PC-9 (cell line): ENCODE measurements at regions of chr4 and their contacts with region 1.

Region 1: DNA sequence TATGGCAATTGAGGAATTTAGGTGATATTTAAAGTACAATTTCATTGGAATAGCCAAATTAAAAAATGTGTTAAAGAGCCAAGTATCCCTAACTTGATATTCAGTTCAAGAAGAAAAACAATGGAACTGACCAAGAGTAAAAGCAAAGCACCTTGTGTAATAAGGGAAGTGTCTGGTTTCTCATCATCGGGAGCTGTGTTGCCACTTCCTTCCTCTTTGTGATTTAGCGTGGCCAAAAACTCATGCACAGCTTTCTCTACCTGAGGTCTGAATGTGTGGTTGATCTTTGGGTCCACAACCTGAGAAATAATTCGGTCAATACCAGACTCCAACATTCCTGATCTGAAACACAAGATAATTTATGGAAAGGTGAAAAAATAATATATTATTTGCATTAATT is 12.4 kb downstream of the BOD1L1 start:
- DNase-seq: no peak
- H3K4me3 ChIP-seq: no peak overlapping the region
- H3K27ac ChIP-seq: no peak overlapping the region
- H3K4me1 ChIP-seq: no peaks in the 10 kb centered on the region
- H3K27me3 ChIP-seq: no peaks in the 10 kb centered on the region
- CTCF ChIP-seq: no peak

Region 2: DNA sequence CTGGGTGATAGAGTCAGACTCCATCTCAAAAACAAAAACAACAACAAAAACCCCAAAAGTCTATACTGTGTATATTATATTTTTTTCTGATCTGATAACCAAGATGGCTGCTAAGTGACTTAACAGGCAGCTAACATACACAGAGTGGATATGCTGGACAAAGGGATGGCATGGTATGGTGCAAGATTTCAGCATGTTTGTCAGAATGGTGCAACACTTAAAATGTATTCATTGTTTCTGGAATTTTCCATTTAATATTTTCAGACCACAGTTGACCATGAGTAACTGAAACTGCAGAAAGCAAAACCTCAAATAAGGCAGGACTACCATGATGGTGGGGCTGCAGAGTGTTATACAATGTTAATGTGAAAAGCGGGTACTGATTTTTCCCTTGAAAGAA is 18.5 kb after region 1 on chr4:
- CTCF ChIA-PET with region 1: no interaction called
- POLR2A ChIA-PET with region 1: no interaction called
- intact Hi-C with region 1: no loop called
- DNase-seq: no peak
- H3K4me3 ChIP-seq: no peak overlapping the region
- H3K27ac ChIP-seq: no peak overlapping the region
- H3K4me1 ChIP-seq: 0 out of 2 replicates have a peak, but pooled peaks cover 1% of the 10 kb centered on the region
- H3K27me3 ChIP-seq: no peaks in the 10 kb centered on the region
- CTCF ChIP-seq: no peak

Region 3: DNA sequence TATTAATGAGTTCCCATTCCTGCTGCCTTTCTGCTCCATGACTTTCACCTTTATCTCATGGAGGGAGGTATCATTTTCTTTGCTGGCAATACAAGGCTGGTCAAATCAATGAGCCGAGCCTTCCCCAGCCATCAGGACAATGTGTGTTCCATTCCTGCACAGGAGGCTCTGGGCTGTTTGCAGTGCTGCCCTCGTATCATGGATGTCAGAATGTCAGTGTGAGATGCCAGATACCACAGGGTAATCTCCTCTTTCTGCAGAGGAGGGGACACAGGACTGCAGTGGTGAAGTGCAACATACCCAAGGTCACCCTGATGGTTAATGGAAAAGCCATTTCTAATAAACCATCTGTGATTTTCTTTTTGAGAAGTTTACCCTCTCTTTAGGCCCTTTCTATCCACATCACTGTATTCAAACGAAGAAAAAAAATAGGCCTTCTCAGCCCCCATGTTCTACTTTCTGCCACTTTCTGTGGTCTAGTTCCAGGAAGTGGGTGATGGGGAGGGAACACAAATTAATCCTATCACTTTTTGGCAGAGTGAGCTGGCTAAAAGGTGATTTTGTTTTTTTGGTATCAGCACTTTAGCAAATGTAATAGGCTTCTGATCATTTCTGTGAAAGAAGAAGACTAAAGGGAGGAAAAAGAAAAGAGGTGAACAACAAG is 502.5 kb after region 1 on chr4:
- CTCF ChIA-PET with region 1: no interaction called
- POLR2A ChIA-PET with region 1: no interaction called
- intact Hi-C with region 1: no loop called
- DNase-seq: no peak
- H3K4me3 ChIP-seq: no peak overlapping the region
- H3K27ac ChIP-seq: no peak overlapping the region
- H3K4me1 ChIP-seq: no peaks in the 10 kb centered on the region
- H3K27me3 ChIP-seq: no peaks in the 10 kb centered on the region
- CTCF ChIP-seq: no peak

Region 4: GRCh38 chr4:14529653-14530052 is 914.5 kb after region 1 on chr4:
- CTCF ChIA-PET with region 1: no interaction called
- POLR2A ChIA-PET with region 1: interaction called, 12 read pairs
- intact Hi-C with region 1: no loop called
- DNase-seq: peak; percentile 5 to 36
- H3K4me3 ChIP-seq: no peak overlapping the region
- H3K27ac ChIP-seq: no peak overlapping the region
- H3K4me1 ChIP-seq: no peaks in the 10 kb centered on the region
- H3K27me3 ChIP-seq: no peaks in the 10 kb centered on the region
- CTCF ChIP-seq: no peak